KBM-7 (cell line): ENCODE measurements at regions of chr1 and their contacts with region 1.

Region 1: GRCh38 chr1:6259491-6260425 is 1.1 kb downstream of the GPR153 start:
- DNase-seq: peak; percentile 83

Region 2: GRCh38 chr1:6343506-6344405 is 84.0 kb after region 1 on chr1:
- in situ Hi-C with region 1: loop called (anchors 10 kb)
- DNase-seq: peak; percentile 86